Mammary epithelial cell (primary cell): ENCODE measurements at regions of chr6 and their contacts with region 1.

Region 1: DNA sequence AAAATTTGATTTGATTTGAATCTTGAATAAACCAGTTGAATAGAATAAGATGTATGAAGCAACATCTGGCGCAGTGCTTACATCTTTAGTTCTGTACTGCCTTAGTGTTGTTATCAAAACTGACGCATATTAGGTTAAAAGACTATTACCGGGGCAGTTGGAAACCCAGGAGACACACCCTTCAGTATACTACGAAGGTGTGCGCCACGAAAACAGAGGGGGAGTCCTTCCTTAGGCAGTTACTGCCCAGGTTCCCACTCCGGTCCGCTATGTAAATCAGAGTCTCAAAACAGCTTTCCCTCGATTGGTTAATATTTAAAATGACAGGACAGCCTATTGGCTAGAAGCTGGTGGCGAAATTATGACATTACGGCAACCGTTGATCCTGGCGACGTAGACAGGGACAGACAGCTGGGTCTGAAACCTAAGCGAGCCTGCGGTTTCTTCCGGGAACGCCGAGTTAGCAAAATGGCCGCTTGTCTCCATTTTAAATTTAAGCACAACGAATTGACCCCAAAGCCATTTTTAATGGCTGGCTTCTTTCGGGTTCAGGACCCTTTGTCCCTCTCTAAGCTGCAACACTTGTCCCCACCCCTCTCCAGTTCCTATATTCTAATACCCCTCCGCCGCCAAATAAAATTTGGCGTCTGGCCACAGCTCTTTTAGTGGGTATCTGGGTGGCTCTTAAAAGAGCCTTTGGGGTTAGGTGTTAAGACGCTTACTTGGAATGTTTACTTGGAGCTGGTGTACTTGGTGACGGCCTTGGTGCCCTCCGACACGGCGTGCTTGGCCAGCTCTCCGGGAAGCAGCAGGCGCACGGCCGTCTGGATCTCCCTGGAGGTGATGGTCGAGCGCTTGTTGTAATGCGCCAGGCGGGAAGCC is 35.8 kb downstream of the HFE start:
- DNase-seq: peak; percentile 97
- H3K4me3 ChIP-seq: peak overlapping the region; percentile 51 to 62 (median 53)
- H3K27ac ChIP-seq: peak overlapping the region; percentile 92
- H3K4me1 ChIP-seq: peaks cover 28% of the 10 kb centered on the region
- H3K27me3 ChIP-seq: no peaks in the 10 kb centered on the region
- CTCF ChIP-seq: no peak

Region 2: GRCh38 chr6:25981568-25982263 is 141.3 kb before region 1 on chr6:
- CTCF ChIA-PET with region 1: no interaction called
- dilution Hi-C with region 1: no loop called
- in situ Hi-C with region 1: no loop called
- intact Hi-C with region 1: no loop called
- DNase-seq: no peak
- H3K4me3 ChIP-seq: no peak overlapping the region
- H3K27ac ChIP-seq: no peak overlapping the region
- H3K4me1 ChIP-seq: no peaks in the 10 kb centered on the region
- H3K27me3 ChIP-seq: no peaks in the 10 kb centered on the region
- CTCF ChIP-seq: no peak

Region 3: GRCh38 chr6:26031595-26032339 is 91.3 kb before region 1 on chr6:
- CTCF ChIA-PET with region 1: no interaction called
- dilution Hi-C with region 1: no loop called
- in situ Hi-C with region 1: no loop called
- intact Hi-C with region 1: loop called (anchors 1 kb)
- DNase-seq: peak; percentile 96
- H3K4me3 ChIP-seq: peak overlapping the region; percentile 53 to 62 (median 61)
- H3K27ac ChIP-seq: peak overlapping the region; percentile 85
- H3K4me1 ChIP-seq: peaks cover 26% of the 10 kb centered on the region
- H3K27me3 ChIP-seq: no peaks in the 10 kb centered on the region
- CTCF ChIP-seq: peak; percentile 5 to 23

Region 4: GRCh38 chr6:26045065-26045927 is 77.7 kb before region 1 on chr6:
- CTCF ChIA-PET with region 1: no interaction called
- dilution Hi-C with region 1: no loop called
- in situ Hi-C with region 1: no loop called
- intact Hi-C with region 1: loop called (anchors 1 kb)
- DNase-seq: peak; percentile 93
- H3K4me3 ChIP-seq: peak overlapping the region; percentile 37 to 64 (median 44)
- H3K27ac ChIP-seq: peak overlapping the region; percentile 79
- H3K4me1 ChIP-seq: peaks cover 27% of the 10 kb centered on the region
- H3K27me3 ChIP-seq: no peaks in the 10 kb centered on the region
- CTCF ChIP-seq: peak; percentile 22 to 36

Region 5: DNA sequence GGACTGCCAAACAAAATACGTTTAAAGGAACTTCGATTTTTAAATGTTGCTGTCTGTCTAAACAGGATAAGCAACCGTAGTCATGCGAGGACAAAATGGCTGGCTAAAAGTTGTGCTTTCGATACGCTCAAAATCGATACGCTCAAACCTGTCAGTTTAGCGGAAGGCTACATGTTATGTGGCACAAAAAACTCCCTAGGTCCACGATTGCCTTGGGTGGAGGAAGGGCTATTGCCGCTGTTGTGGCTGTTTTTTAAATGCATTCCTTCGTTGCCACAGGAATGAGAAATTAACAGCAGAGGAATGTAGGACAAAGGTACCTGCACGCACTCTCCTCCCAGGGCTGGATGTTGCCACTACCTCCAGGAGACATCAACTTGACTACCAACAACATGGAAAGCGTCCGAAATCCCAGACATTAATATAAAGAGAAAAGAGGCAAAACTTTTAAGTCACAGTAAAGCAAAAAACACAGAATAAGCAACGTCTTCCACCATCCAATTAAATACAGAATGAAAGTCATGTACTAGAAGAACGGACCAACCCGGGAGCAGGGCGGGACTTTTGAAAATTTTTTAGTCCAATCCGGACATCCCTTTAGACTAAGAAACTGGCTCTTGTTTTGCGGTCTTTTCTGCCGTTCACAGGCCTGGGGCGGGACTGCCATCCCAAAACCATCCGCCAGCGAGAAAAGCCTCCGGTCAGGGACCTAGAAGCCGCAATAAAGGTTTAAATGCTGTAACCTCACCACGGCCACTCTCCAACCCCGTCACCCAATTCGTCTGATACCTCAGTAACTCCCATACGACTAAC is 68.0 kb before region 1 on chr6:
- CTCF ChIA-PET with region 1: no interaction called
- dilution Hi-C with region 1: no loop called
- in situ Hi-C with region 1: no loop called
- intact Hi-C with region 1: loop called (anchors 1 kb)
- DNase-seq: peak; percentile 92
- H3K4me3 ChIP-seq: peak overlapping the region; percentile 61 to 82 (median 62)
- H3K27ac ChIP-seq: peak overlapping the region; percentile 91
- H3K4me1 ChIP-seq: peaks cover 9% of the 10 kb centered on the region
- H3K27me3 ChIP-seq: no peaks in the 10 kb centered on the region
- CTCF ChIP-seq: peak in 1 of 2 donors; percentile 19

Region 6: GRCh38 chr6:26103770-26104456 is 19.1 kb before region 1 on chr6:
- CTCF ChIA-PET with region 1: interaction called, 6 read pairs
- dilution Hi-C with region 1: no loop called
- in situ Hi-C with region 1: no loop called
- intact Hi-C with region 1: loop called (anchors 1 kb)
- DNase-seq: peak; percentile 95
- H3K4me3 ChIP-seq: peak overlapping the region; percentile 45 to 47 (median 47)
- H3K27ac ChIP-seq: peak overlapping the region; percentile 93
- H3K4me1 ChIP-seq: peaks cover 8% of the 10 kb centered on the region
- H3K27me3 ChIP-seq: no peaks in the 10 kb centered on the region
- CTCF ChIP-seq: peak; percentile 33 to 45

Region 7: GRCh38 chr6:26196846-26197648 is 74.0 kb after region 1 on chr6:
- CTCF ChIA-PET with region 1: no interaction called
- dilution Hi-C with region 1: no loop called
- in situ Hi-C with region 1: no loop called
- intact Hi-C with region 1: loop called (anchors 1 kb)
- DNase-seq: peak; percentile 89
- H3K4me3 ChIP-seq: peak overlapping the region; percentile 69 to 90 (median 87)
- H3K27ac ChIP-seq: peak overlapping the region; percentile 87
- H3K4me1 ChIP-seq: peaks cover 8% of the 10 kb centered on the region
- H3K27me3 ChIP-seq: no peaks in the 10 kb centered on the region
- CTCF ChIP-seq: no peak